OCI-LY7 (cell line): ENCODE measurements at regions of chr2 and their contacts with region 1.

Region 1: GRCh38 chr2:231612179-231613053 is 19.8 kb downstream of the TEX44 start:
- DNase-seq: peak; percentile 91
- H3K4me3 ChIP-seq: peak overlapping the region; percentile 60
- H3K27ac ChIP-seq: peak overlapping the region; percentile 99
- H3K4me1 ChIP-seq: peaks cover 73% of the 10 kb centered on the region
- CTCF ChIP-seq: peak; percentile 98

Region 2: GRCh38 chr2:231662028-231662810 is 49.8 kb after region 1 on chr2:
- CTCF ChIA-PET with region 1: interaction called, 3 read pairs
- POLR2A ChIA-PET with region 1: interaction called, 33 read pairs
- intact Hi-C with region 1: loop called (anchors 1 kb)
- DNase-seq: peak; percentile 99
- H3K4me3 ChIP-seq: peak overlapping the region; percentile 63
- H3K27ac ChIP-seq: peak overlapping the region; percentile 73
- H3K4me1 ChIP-seq: peaks cover 63% of the 10 kb centered on the region
- CTCF ChIP-seq: no peak

Region 3: DNA sequence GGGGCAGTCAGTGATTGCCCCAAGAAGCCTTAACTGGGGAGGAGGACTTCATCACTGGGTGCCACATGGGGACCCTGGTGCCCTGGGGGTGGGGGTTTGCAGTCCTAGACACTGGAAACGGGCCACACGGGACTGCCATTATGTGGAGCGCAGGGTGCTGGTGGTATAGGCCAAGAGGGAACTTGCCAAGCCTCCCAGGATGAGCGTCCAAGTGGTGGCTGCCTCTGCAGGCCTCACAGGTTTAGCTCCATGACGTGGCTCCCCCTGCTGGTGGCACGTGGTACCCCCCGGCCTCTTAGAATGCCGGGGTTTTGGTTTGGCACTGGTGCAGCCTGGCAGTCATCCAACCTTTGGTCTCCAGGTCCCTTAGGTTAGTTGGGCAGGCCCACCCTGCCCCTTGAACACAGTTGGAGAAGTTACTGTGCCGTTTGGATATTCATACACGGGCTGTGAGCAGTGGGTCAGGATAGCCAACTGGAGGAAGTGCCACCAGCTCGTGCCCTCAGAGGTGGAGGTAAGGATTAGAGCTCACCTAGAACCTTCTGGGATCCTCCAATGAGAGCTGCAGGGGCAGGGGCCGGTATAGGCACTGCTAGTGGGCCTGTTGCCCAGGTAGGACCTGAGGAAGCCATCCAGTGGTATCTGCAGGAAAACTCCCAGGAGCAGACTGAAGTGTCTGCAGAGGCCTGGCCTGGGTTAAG is 101.5 kb after region 1 on chr2:
- CTCF ChIA-PET with region 1: interaction called, 11 read pairs
- POLR2A ChIA-PET with region 1: interaction called, 8 read pairs
- intact Hi-C with region 1: loop called (anchors 1 kb)
- DNase-seq: peak; percentile 91
- H3K4me3 ChIP-seq: peak overlapping the region; percentile 18
- H3K27ac ChIP-seq: peak overlapping the region; percentile 68
- H3K4me1 ChIP-seq: peaks cover 63% of the 10 kb centered on the region
- CTCF ChIP-seq: peak; percentile 94

Region 4: GRCh38 chr2:231786177-231786916 is 173.9 kb after region 1 on chr2 and contains the start of gene COPS7B:
- CTCF ChIA-PET with region 1: no interaction called
- POLR2A ChIA-PET with region 1: interaction called, 7 read pairs
- intact Hi-C with region 1: loop called (anchors 1 kb)
- DNase-seq: peak; percentile 88
- H3K4me3 ChIP-seq: peak within 1 kb of the TSS; percentile 99
- H3K27ac ChIP-seq: peak within 1 kb of the TSS; percentile 45
- H3K4me1 ChIP-seq: peaks cover 42% of the 10 kb centered on the region
- CTCF ChIP-seq: peak; percentile 81
- total RNA-seq, gene COPS7B: 50.6 and 55.5 TPM in 2 replicates